GM10248 (cell line): ENCODE measurements at regions of chr12 and their contacts with region 1.

Region 1: GRCh38 chr12:77925536-77926108 is 94.9 kb downstream of the NAV3 start:
- DNase-seq: peak; percentile 46
- CTCF ChIP-seq: peak; percentile 80

Region 2: DNA sequence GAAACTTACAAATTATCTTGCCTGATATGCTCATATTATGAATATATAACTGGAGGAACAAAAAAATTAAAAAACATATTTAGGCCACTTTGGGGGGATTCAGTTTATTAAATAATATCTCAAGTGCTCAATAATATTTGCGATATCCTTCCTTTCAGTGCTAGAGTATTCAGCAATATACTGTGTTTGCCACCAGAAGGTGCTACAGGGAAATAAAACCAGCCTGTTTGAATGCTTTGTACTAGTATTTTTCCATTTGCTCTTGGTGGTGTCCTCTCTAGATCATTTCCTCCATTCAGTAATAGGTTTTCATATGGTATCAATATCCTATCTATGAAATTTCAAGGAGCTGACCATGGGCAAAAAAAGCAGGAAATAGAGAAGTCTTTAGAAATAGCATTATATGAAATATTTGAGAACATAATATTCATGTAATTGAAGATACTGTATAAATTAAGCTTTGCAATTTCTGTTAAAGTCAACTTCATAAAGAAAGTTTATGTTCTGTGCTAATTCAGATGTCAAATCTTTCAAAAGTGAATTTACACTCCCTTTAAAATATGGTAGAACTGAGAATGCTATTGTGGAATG is 201.2 kb before region 1 on chr12:
- CTCF ChIA-PET with region 1: interaction called, 23 read pairs
- POLR2A ChIA-PET with region 1: no interaction called
- DNase-seq: no peak
- CTCF ChIP-seq: peak; percentile 63

Region 3: GRCh38 chr12:77907936-77908335 is 17.7 kb before region 1 on chr12:
- CTCF ChIA-PET with region 1: interaction called, 28 read pairs
- POLR2A ChIA-PET with region 1: no interaction called
- DNase-seq: no peak
- CTCF ChIP-seq: no peak

Region 4: GRCh38 chr12:77914081-77914488 is 11.5 kb before region 1 on chr12:
- CTCF ChIA-PET with region 1: interaction called, 28 read pairs
- POLR2A ChIA-PET with region 1: no interaction called
- DNase-seq: no peak
- CTCF ChIP-seq: peak; percentile 7

Region 5: DNA sequence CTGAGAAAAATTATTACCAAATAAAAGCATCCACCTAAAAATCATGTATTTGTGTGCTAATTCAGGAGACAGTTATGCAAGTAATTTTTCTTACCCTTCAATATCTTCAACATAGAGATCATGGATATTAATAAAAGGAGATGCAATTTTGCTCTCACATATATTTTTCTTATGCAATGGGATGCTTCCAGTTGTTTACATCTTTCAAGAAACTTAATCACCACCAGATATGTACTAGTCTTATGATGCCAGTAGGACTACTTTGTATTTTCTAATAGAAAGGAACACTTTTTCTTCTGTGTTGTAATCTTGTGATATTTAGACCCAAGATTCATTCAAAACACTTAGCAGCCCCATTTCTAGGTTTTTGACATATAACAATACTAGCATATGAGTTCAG is 12.7 kb after region 1 on chr12:
- CTCF ChIA-PET with region 1: interaction called, 11 read pairs
- POLR2A ChIA-PET with region 1: interaction called, 6 read pairs
- DNase-seq: no peak
- CTCF ChIP-seq: no peak